ENCODE measurements at regions of chr6 and their contacts with region 1.

Region 1: DNA sequence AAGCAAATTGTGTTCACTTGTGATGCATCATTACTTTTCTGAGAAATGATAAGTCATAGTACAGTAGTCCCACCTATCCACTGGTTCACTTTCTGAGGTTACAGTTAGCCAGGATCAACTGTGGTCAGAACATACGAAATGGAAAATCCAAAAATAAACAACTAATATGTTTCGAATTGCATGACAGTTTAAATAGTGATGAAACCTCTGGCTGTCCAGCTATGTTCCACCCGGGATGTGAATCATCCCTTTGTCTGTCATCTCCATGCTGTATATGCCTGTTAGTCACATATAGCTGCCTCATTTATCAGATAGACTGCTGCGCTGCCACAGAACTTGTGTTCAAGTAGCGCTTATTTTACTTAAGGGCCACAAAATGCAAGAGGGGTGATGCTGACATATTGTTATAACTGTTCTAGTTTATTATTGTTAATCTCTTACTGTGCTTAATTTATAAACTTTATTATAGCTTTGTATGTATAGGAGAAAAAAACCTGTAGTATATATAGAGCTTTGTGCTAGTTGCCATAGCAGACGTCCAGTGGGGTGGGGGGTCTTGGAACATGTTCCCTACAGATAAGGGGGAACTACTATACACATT is 29.2 kb downstream of the AFDN start:
- DNase-seq: peak in 1 of 2 experiments; percentile 35
- H3K4me3 ChIP-seq: no peak overlapping the region
- H3K27ac ChIP-seq: peak overlapping the region; percentile 41
- H3K4me1 ChIP-seq: peaks cover 20% of the 10 kb centered on the region
- H3K27me3 ChIP-seq: no peaks in the 10 kb centered on the region
- CTCF ChIP-seq: no peak

Region 2: DNA sequence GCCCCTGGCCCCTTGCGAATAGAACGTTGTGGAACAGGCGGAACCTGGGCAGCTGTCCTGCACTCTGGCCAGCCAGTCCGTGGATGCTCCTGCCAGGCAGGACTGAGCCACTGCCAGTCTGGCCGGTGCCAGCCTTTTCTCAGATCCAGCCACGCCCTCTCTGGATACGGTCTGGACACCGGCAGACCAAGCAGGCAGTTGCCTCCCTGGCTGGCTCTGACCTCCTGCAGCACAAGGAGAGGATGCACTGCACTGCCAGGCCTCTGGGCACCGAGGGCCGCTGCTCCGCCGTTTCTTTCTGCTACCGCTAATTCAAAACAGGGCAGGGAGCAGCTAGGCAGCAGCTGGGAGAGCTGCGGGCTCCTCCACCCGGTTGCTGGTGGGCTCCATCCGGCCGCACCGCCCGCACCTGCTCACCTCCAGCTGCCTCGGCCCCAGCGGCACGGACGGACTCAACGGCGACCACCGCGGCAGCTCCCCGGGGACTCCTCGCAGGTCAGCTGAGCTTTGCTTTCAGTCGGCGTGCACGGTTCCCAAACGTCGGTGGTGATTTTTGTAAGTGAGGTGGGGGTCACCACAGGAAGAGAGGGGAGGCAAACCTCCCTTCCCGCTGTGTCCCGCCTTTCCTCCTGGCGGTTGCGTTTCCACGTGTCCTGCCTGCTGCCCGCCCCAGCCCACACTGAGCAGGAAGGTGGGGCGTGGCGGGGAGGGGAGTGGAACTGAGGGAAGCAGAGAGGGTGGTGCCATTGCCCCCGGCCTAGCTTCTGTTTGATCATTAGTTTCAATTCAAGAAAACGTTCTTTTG is 59.5 kb before region 1 on chr6:
- CTCF ChIA-PET with region 1: no interaction called
- POLR2A ChIA-PET with region 1: no interaction called
- intact Hi-C with region 1: loop called (anchors 10 kb)
- DNase-seq: peak in 1 of 2 experiments; percentile 46
- H3K4me3 ChIP-seq: no peak overlapping the region
- H3K27ac ChIP-seq: no peak overlapping the region
- H3K4me1 ChIP-seq: peaks cover 34% of the 10 kb centered on the region
- H3K27me3 ChIP-seq: no peaks in the 10 kb centered on the region
- CTCF ChIP-seq: no peak

Region 3: DNA sequence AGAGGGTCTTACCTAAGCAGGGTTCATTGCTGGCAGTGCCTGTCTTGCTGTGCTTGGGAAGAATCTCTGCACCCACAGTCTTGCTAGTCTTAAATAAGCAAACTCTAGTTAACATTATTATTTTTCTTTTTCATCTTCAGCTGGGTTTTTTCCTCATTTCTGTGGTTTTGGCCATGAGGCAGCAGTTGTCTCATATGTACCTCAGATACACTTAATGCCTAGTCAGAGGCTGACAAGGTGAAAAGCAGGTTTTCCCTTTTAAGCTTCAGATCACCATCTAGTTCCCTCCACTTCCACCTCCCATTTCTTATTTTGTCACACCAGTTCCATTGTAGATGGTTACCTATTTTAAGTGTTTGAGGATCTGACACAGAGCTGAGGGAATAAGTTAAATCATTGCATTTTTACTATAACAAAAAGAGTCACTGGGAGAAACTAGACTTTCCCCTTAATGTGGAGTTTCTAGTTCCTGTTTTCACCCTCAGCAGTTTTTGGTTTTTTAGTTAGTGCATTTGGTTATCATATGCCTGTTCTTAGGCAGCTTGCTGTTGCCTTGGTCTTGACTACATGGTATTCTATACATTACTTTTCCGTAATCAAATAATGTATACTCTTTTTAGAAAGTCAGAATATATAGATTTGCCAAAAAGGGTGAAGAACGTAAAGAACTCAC is 16.7 kb after region 1 on chr6:
- CTCF ChIA-PET with region 1: no interaction called
- POLR2A ChIA-PET with region 1: interaction called, 28 read pairs
- intact Hi-C with region 1: no loop called
- DNase-seq: no peak
- H3K4me3 ChIP-seq: no peak overlapping the region
- H3K27ac ChIP-seq: no peak overlapping the region
- H3K4me1 ChIP-seq: no peaks in the 10 kb centered on the region
- H3K27me3 ChIP-seq: no peaks in the 10 kb centered on the region
- CTCF ChIP-seq: no peak

Measured in PC-9 (cell line).